ENCODE measurements at regions of chr1 and their contacts with region 1.

Region 1: GRCh38 chr1:37995751-37996345 is 6.0 kb upstream of the SF3A3 start:
- DNase-seq: peak; percentile 68
- H3K4me3 Mint-ChIP-seq: peak overlapping the region; percentile 48
- H3K27ac Mint-ChIP-seq: peak overlapping the region; percentile 66
- H3K4me1 Mint-ChIP-seq: peaks cover 37% of the 10 kb centered on the region
- H3K27me3 Mint-ChIP-seq: no peaks in the 10 kb centered on the region

Region 2: GRCh38 chr1:36731226-36732014 is 1264.4 kb before region 1 on chr1:
- CTCF ChIA-PET with region 1: no interaction called
- intact Hi-C with region 1: no loop called
- DNase-seq: peak; percentile 10
- H3K4me3 Mint-ChIP-seq: no peak overlapping the region
- H3K27ac Mint-ChIP-seq: no peak overlapping the region
- H3K4me1 Mint-ChIP-seq: no peaks in the 10 kb centered on the region
- H3K27me3 Mint-ChIP-seq: peaks cover 34% of the 10 kb centered on the region

Region 3: DNA sequence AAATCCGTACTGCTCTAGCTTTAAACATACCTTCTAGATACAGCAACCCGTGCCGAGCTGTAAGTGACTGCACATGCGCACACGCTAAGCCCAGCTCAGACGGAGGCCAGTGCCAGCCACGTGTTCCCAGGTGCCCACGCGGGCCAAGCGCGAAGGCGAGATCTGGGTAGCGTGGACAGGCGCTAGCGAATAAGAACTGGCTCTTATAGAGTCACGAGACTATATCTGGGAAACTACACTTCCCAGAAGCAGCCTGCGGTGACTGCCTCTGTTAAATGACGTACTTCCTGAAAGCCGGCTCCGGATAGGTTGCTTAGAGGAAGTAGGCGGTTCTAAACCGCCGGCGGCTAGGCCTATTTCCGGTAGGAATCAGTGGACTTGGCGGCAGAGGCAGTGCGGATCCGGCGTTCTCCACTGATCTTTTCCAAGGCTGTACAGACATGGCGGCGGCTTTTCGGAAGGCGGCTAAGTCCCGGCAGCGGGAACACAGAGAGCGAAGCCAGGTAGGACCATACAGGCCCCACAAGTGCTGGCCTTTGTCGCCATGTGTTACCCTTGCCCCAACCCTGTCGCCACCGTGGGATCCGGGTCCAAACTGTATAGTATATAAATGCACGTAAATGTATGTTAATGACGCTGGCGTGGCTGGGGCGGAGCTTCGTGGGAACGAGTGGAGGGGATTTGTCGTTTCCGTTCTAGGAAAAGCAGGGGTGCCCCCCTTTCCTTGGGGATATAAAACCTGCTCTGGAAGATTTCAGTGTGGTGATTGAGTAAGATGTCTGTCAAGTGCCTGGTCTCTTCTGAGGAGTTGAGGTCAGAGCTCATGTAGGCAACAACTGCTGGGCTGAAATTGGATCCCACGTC is 16.7 kb after region 1 on chr1 and contains the start of gene UTP11:
- CTCF ChIA-PET with region 1: interaction called, 15 read pairs
- intact Hi-C with region 1: no loop called
- DNase-seq: peak; percentile 96
- H3K4me3 Mint-ChIP-seq: peak within 1 kb of the TSS; percentile 98
- H3K27ac Mint-ChIP-seq: peak within 1 kb of the TSS; percentile 95
- H3K4me1 Mint-ChIP-seq: peaks cover 55% of the 10 kb centered on the region
- H3K27me3 Mint-ChIP-seq: no peaks in the 10 kb centered on the region
- total RNA-seq, gene UTP11: 49.7 to 49.8 TPM

Measured in activated naive CD4-positive, alpha-beta T cell treated with anti-CD3 and anti-CD28 coated beads for 36 hours (primary cell).